Right ventricle myocardium superior (tissue), 1 donor: ENCODE measurements at regions of chr15 and their contacts with region 1.

Region 1: GRCh38 chr15:35115155-35115725 is 30.1 kb upstream of the NANOGP8 start:
- DNase-seq: no peak
- ATAC-seq: no peak

Region 2: GRCh38 chr15:35173444-35174118 is 58.3 kb after region 1 on chr15:
- intact Hi-C with region 1: loop called (anchors 10 kb)
- DNase-seq: no peak
- ATAC-seq: no peak